ENCODE measurements at regions of chr9 and their contacts with region 1.

Region 1: DNA sequence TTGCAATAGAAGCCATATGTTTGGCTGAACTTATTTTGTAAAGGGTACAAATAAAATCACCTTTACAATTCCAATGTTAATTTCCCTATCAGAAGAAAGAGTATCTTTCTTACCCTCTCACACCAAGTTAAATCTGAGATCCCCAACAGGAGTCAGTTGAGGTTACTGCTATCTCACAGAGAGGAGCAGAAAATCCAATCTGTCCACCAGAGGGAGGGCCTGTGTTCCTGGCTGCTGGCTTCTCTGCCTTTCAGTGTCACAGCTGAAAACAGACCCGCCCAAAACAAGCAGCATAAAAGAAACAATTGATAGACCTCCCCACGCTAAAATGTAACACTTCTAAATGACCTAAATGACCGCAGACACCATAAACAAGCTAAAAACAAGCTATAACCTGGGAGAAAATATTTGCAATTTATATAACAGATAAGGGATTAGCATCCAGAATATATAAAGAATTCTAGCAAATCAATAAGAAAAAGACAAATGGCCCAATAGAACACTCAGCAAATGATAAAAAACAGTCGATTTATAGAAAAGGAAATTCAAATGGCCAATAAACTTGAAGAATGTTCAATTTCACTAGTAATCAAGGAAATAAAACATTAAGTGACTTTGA is 24.5 kb upstream of the MVB12B start:
- DNase-seq: peak; percentile 81
- ATAC-seq: peak; percentile 93
- H3K4me3 Mint-ChIP-seq: no peak overlapping the region
- H3K27ac Mint-ChIP-seq: peak overlapping the region; percentile 16
- H3K4me1 Mint-ChIP-seq: peaks cover 18% of the 10 kb centered on the region
- H3K27me3 Mint-ChIP-seq: peaks cover 4% of the 10 kb centered on the region

Region 2: GRCh38 chr9:126248680-126249079 is 53.4 kb before region 1 on chr9:
- CTCF ChIA-PET with region 1: no interaction called
- DNase-seq: no peak
- ATAC-seq: no peak
- H3K4me3 Mint-ChIP-seq: no peak overlapping the region
- H3K27ac Mint-ChIP-seq: no peak overlapping the region
- H3K4me1 Mint-ChIP-seq: no peaks in the 10 kb centered on the region
- H3K27me3 Mint-ChIP-seq: peaks cover 34% of the 10 kb centered on the region

Region 3: DNA sequence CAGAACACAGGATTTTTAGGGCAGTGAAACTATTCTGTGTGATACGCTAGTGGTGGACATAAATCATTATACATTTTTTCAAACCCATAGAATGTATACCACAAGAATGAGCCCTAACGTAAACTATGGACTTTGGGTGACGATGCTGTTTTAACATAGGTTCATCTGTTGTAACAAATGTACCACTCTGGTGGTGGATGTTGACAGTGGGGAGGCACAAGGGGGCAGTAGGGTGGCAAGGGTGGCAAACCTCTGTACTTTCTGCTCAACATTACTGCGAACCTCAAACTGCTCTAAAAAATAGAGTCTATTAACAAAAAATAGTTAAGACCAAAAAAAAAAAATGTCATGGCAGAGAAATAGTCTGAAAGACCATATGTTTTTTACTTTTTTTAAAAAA is 15.4 kb after region 1 on chr9:
- CTCF ChIA-PET with region 1: interaction called, 13 read pairs
- DNase-seq: peak; percentile 59
- ATAC-seq: no peak
- H3K4me3 Mint-ChIP-seq: no peak overlapping the region
- H3K27ac Mint-ChIP-seq: no peak overlapping the region
- H3K4me1 Mint-ChIP-seq: peaks cover 34% of the 10 kb centered on the region
- H3K27me3 Mint-ChIP-seq: no peaks in the 10 kb centered on the region